GM18951 (cell line): ENCODE measurements at regions of chr7 and their contacts with region 1.

Region 1: GRCh38 chr7:49791088-49791741 is 17.8 kb downstream of the VWC2 start:
- POLR2A ChIP-seq: no peak

Region 2: DNA sequence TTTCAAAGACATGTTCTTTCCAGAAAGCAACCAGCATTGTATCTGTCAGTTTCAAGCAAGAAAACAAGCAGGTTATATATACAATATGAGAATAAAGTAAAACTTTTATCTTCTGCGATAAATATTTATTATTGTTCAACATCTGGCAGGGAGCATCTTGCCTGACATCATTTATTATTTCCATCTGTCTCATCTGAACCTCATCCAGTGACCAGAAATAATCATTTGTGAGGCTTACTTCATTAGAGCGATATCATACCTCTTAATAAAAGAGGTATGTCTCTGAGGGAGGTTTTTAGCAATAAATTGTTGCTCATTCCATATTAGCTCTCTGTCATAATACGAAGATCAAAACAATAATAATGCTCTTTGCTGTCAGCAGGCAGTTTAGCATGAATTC is 640.7 kb before region 1 on chr7:
- in situ Hi-C with region 1: no loop called
- POLR2A ChIP-seq: no peak

Region 3: GRCh38 chr7:49513911-49514310 is 277.3 kb before region 1 on chr7:
- in situ Hi-C with region 1: no loop called
- POLR2A ChIP-seq: no peak

Region 4: DNA sequence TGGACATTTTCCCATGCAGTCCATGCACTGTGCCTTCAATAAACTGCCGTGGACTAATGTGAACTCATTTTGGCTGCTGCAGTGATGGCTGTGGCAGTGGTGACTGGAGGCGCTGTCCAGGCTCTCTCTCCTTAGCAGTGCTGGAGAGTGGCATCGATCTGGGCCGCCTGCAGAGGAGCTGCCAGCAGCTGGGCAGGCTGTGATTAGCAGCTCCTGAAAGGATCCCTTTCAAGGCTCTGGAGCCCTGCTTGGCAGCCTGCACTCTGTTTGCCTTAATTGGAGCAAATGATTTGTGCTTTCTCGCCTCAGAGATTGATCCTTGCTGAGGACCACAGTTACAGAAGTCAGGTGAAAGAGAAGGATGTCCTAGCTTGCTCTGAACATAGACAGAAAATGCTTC is 147.9 kb before region 1 on chr7:
- in situ Hi-C with region 1: loop called (anchors 10 kb)
- POLR2A ChIP-seq: no peak